Activated CD4-positive, alpha-beta memory T cell treated with anti-CD3 and anti-CD28 coated beads for 36 hours (primary cell): ENCODE measurements at regions of chr1 and their contacts with region 1.

Region 1: GRCh38 chr1:35451125-35451528 is 106.1 kb downstream of the KIAA0319L start:
- DNase-seq: peak; percentile 85
- H3K4me3 Mint-ChIP-seq: no peak overlapping the region
- H3K27ac Mint-ChIP-seq: no peak overlapping the region
- H3K4me1 Mint-ChIP-seq: peaks cover 50% of the 10 kb centered on the region
- H3K27me3 Mint-ChIP-seq: no peaks in the 10 kb centered on the region

Region 2: DNA sequence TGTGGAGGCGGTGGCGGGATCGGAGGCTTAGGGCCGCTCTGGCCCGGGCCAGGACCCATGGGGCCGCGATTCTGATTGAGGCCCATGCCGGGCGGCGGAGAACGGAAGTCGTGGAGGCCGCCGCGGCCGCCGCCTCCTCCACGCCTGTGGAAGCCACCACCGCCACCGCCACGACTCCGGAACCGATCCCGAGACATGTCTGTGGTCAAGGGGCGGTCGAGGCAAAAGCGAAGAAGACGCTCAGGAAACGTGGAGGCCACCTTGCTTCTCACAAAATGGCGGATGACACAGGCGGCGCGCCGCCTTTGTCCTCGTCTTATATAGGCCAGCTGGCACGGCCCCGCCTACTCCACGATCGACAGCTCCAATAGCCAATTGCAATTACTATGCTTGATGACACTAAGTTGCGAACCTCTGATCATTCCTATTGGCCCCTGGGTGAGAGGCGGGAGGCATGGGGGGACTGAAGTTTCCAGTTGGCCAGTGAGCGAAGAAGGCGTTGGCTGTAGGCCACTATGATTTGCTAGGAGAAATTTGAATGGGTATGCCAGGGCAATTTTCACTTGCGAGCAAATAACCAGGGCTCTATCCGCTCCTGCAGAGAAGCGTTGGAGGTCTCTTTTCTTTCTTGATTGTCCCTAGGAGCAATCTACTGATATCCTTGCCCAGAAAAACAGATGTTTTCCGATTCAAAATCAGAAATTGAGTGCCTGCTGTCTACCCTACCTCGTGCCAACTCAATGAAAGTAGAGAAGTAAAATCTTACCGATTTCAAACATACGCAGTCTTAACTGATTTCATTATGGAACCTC is 258.1 kb before region 1 on chr1 and contains the start of gene SFPQ:
- CTCF ChIA-PET with region 1: no interaction called
- POLR2A ChIA-PET with region 1: no interaction called
- intact Hi-C with region 1: loop called (anchors 5 kb)
- DNase-seq: peak; percentile 98
- H3K4me3 Mint-ChIP-seq: peak within 1 kb of the TSS; percentile 95
- H3K27ac Mint-ChIP-seq: peak within 1 kb of the TSS; percentile 98
- H3K4me1 Mint-ChIP-seq: peaks cover 35% of the 10 kb centered on the region
- H3K27me3 Mint-ChIP-seq: no peaks in the 10 kb centered on the region
- total RNA-seq, gene SFPQ: 259 to 275 TPM

Region 3: DNA sequence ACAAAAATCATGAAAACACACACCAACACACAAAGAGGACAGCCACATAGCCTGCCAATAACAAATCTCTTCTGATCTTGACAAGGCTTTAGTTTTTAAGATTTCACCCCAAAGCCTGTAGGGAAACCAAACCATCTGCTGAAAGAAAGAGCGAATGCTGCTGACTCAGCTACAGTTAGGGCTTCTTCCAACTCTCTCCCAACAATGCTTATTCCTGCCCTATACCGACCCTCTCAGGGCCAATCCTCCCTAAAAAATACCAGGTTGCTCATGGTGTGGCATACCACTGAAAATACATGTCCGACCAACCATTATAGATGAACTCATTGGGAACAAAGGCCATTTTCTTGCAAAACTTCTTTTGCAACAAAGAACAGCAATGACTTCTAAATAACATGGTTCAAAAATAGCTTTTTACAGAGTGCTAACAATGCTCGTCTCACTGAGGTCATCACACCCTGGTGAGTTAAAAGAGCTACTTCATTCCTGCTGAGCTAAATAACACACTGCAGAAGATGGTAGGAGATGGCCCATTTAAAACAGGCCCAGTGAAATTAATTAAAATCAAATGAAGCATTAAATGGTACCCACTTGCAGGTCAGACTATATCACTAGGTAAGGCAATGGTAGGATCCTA is 20.0 kb after region 1 on chr1:
- CTCF ChIA-PET with region 1: interaction called, 29 read pairs
- POLR2A ChIA-PET with region 1: no interaction called
- intact Hi-C with region 1: no loop called
- DNase-seq: no peak
- H3K4me3 Mint-ChIP-seq: no peak overlapping the region
- H3K27ac Mint-ChIP-seq: no peak overlapping the region
- H3K4me1 Mint-ChIP-seq: peaks cover 8% of the 10 kb centered on the region
- H3K27me3 Mint-ChIP-seq: no peaks in the 10 kb centered on the region

Region 4: DNA sequence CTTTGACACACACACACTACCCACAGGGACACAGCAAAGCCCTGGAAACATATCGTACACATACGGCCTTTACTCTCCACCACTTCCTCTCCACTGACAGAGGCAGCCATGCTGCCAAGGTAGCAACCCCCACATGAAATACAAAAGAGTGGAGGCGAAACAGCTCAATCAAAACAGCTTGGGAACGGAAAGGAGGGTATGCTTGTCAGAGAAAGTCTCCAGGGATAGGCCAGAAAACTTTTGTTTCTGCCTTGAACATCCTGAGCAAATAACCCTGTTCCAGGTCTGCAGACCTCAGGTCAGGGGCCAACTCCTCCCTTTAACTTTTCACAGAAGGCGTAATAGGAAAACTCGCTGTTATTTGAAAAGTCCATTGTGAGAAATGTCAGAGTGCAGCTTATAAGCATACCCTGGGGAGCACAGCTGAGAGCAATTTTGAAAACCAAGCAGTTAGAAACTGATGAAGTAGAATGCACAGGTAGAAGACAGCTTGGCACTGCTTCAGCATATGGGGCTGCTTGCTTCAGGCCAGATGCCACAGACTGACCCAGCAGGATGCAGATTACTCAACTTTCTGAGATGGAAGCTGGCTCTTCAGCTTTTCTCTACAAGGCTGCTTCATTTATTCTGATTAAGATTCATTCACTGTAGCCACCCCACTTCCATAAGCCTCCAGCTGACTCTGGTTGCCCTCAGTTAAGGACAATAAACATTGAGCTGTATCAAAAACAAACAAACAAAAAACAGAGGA is 88.1 kb after region 1 on chr1:
- CTCF ChIA-PET with region 1: interaction called, 74 read pairs
- POLR2A ChIA-PET with region 1: interaction called, 5 read pairs
- intact Hi-C with region 1: loop called (anchors 1 kb)
- DNase-seq: peak; percentile 56
- H3K4me3 Mint-ChIP-seq: peak overlapping the region; percentile 55
- H3K27ac Mint-ChIP-seq: peak overlapping the region; percentile 87
- H3K4me1 Mint-ChIP-seq: peaks cover 73% of the 10 kb centered on the region
- H3K27me3 Mint-ChIP-seq: no peaks in the 10 kb centered on the region

Region 5: DNA sequence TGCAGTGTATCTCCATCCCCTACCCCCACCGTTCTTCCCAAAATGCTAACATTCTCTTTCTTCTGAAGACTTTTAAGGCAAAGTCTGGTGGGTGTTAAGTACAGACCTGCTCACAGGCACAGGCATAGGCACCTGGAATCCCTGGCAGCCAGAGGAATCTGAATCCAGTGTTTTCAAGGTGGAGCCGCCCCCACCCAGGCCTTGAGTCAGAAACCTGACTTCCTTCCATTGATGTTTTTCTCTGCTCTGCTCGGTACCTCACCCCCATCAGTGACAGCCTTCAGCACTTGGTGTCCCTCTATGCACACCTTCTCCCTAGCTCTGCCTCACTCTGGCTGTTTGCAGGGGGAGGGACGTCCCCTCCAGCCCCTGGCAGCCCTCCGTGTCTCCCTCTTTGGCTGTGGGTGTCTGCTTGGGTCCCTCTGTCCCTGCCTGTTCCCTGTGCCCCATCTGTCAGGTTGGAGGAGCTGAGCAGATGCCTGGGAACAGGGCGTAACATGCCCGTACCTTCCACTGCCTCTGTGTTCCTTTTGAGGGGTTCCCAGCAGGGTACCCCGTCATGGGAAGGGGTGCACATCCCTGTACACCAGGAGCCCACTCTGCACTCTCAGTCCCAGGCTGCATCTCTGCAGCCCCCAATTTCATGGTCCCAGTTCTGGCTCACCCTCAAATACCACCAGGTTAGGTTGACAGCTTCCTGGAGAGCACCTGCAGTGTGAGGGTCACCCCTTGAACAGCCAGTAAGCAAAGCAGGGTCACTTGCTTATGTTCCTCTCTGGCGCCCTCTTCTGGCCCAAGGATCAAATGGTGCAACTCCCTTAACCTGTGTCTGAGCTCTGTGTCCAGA is 113.1 kb after region 1 on chr1:
- CTCF ChIA-PET with region 1: interaction called, 245 read pairs
- POLR2A ChIA-PET with region 1: interaction called, 5 read pairs
- intact Hi-C with region 1: loop called (anchors 1 kb)
- DNase-seq: peak; percentile 87
- H3K4me3 Mint-ChIP-seq: no peak overlapping the region
- H3K27ac Mint-ChIP-seq: peak overlapping the region; percentile 44
- H3K4me1 Mint-ChIP-seq: peaks cover 22% of the 10 kb centered on the region
- H3K27me3 Mint-ChIP-seq: no peaks in the 10 kb centered on the region

Region 6: GRCh38 chr1:35726450-35727433 is 275.6 kb after region 1 on chr1:
- CTCF ChIA-PET with region 1: interaction called, 28 read pairs
- POLR2A ChIA-PET with region 1: no interaction called
- intact Hi-C with region 1: no loop called
- DNase-seq: peak; percentile 56
- H3K4me3 Mint-ChIP-seq: no peak overlapping the region
- H3K27ac Mint-ChIP-seq: no peak overlapping the region
- H3K4me1 Mint-ChIP-seq: no peaks in the 10 kb centered on the region
- H3K27me3 Mint-ChIP-seq: no peaks in the 10 kb centered on the region